B cell (primary cell): ENCODE measurements at regions of chr17 and their contacts with region 1.

Region 1: GRCh38 chr17:76458580-76459490 is 5.9 kb upstream of the UBE2O start:
- DNase-seq: peak; percentile 68
- ATAC-seq: peak; percentile 80
- H3K4me3 ChIP-seq: no peak overlapping the region
- H3K4me3 Mint-ChIP-seq: no peak overlapping the region
- H3K27ac ChIP-seq: no peak overlapping the region
- H3K27ac Mint-ChIP-seq: no peak overlapping the region
- H3K4me1 ChIP-seq: no peaks in the 10 kb centered on the region
- H3K4me1 Mint-ChIP-seq: no peaks in the 10 kb centered on the region
- H3K27me3 ChIP-seq: peaks cover 0 to 3% (median 0%) of the 10 kb centered on the region in 4 experiments
- H3K27me3 Mint-ChIP-seq: no peaks in the 10 kb centered on the region
- CTCF ChIP-seq: peak; percentile 21

Region 2: GRCh38 chr17:76421044-76421407 is 37.8 kb before region 1 on chr17:
- CTCF ChIA-PET with region 1: interaction called, 265 read pairs
- POLR2A ChIA-PET with region 1: interaction called, 10 read pairs
- intact Hi-C with region 1: no loop called
- DNase-seq: no peak
- ATAC-seq: no peak
- H3K4me3 ChIP-seq: no peak overlapping the region
- H3K4me3 Mint-ChIP-seq: peak overlapping the region; percentile 21
- H3K27ac ChIP-seq: peak overlapping the region in 1 of 2 donors; percentile 32
- H3K27ac Mint-ChIP-seq: peak overlapping the region; percentile 66
- H3K4me1 ChIP-seq: peaks cover 66 to 75% of the 10 kb centered on the region in 2 donors
- H3K4me1 Mint-ChIP-seq: peaks cover 73% of the 10 kb centered on the region
- H3K27me3 ChIP-seq: no peaks in the 10 kb centered on the region
- H3K27me3 Mint-ChIP-seq: no peaks in the 10 kb centered on the region
- CTCF ChIP-seq: no peak

Region 3: DNA sequence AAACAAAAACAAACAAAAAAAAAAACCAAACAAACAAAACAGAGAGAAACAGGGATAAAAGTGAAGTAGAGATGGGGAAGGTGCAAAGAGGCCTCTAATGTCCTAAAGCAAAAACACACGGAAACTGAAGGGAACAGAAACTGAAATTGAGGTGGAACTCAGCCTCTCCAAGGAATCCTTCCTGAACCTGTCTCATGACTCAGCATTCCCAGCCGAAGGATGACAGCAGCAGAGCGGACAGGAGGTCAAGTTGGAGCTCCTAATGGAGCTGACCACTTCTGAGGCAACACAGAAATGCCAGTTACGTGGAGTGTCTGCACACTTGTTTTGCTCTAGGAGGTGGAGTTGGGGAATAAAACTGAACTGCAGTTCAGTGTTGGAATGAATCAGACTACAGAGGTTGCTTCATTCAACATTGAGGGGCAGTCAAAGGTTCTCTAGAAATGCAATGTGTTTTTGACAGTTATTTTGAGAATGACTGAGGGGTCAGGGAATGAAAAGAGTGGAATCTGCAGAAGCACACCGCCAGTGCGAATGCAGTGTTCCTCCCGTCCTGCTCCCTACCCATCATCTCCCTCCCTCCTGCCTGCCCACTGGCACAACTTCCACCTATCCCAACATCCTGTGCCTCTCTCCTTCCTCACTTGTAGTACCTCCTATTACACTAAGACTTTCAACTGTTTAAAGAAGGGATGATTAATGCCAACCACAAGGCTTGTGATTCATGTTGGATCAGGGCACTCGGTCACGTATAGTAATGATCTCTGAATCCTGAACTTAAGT is 12.2 kb before region 1 on chr17:
- CTCF ChIA-PET with region 1: interaction called, 19 read pairs
- POLR2A ChIA-PET with region 1: no interaction called
- intact Hi-C with region 1: no loop called
- DNase-seq: no peak
- ATAC-seq: no peak
- H3K4me3 ChIP-seq: no peak overlapping the region
- H3K4me3 Mint-ChIP-seq: no peak overlapping the region
- H3K27ac ChIP-seq: no peak overlapping the region
- H3K27ac Mint-ChIP-seq: no peak overlapping the region
- H3K4me1 ChIP-seq: peaks cover 60 to 71% of the 10 kb centered on the region in 2 donors
- H3K4me1 Mint-ChIP-seq: peaks cover 86% of the 10 kb centered on the region
- H3K27me3 ChIP-seq: no peaks in the 10 kb centered on the region
- H3K27me3 Mint-ChIP-seq: no peaks in the 10 kb centered on the region
- CTCF ChIP-seq: no peak

Region 4: DNA sequence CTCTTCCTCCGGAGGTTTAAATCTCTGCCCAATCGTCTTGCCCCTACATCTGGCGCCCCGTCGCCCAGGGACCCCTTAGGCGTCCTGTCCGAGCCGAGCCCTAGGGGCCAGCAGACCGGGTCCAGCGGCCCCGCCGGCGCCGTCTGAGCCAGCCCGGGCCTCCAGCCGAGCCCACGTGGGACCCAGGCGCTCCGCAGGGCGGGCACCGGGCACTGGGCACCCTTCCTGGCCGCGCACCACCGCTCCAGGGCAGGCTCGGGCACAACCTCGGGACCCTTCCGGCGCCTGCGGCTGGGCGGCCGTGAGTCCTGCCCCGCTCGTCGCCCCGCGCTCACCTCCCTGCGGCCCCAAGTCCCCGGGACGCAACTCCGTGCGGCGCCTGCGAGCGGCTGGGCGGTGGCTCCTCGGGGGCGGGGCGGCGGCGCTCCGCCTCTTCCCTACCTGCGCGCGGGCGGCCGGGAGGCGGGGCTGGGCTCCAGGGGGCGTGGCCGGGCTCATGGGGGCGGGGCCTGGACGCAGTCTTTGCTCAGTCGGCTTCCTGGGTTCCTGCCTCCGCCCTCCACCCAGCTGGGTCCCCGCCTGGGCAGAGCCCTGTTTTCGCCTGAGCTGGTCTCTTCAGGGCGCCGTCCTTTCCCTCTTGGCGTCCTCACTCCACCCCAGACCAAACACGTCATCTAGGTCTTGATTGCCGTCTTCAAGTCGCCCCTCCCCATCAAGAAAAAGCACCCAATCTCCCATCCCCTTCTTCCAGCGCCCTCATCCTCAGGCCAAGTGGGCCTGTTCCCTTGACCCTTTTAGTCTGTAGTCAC is 42.4 kb after region 1 on chr17 and contains the start of gene RHBDF2:
- CTCF ChIA-PET with region 1: interaction called, 442 read pairs
- POLR2A ChIA-PET with region 1: interaction called, 6 read pairs
- intact Hi-C with region 1: loop called (anchors 1 kb)
- DNase-seq: peak; percentile 95
- ATAC-seq: peak; percentile 85
- H3K4me3 ChIP-seq: peak within 1 kb of the TSS; percentile 46 to 97 (median 95)
- H3K4me3 Mint-ChIP-seq: peak within 1 kb of the TSS; percentile 97
- H3K27ac ChIP-seq: peak within 1 kb of the TSS; percentile 78 to 94
- H3K27ac Mint-ChIP-seq: peak within 1 kb of the TSS; percentile 99
- H3K4me1 ChIP-seq: peaks cover 38 to 63% of the 10 kb centered on the region in 2 donors
- H3K4me1 Mint-ChIP-seq: peaks cover 56% of the 10 kb centered on the region
- H3K27me3 ChIP-seq: no peaks in the 10 kb centered on the region
- H3K27me3 Mint-ChIP-seq: no peaks in the 10 kb centered on the region
- CTCF ChIP-seq: no peak
- total RNA-seq, gene RHBDF2: 482 and 509 TPM in 2 replicates